GM18951 (cell line): ENCODE measurements at regions of chr4 and their contacts with region 1.

Region 1: DNA sequence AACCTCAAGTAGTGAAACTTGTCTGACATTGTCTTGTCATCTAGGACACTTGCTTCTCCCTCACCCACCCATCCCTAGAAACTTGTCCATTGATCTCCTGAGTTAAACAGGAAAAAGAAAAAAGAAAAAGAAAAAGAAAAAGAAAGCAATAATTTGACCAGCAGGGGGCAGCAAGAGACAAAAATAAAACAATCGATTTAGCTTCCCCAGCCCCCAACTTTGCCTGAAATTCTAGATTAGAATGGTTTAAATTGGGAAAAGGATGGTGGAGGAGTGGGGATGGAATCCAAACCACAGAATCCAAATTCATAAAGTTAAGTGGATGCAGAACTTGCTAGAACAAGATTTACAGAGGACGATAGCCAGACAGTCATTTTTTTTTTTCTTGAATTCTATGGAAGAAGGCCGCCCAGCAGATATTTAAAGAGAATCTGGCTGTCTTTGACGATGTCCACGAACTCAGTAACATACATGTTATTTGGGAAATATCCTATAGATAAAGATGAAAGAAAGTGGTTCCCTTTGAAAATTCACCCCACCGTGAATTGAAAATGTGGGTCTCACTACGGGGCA is 282.9 kb downstream of the USP46 start:
- POLR2A ChIP-seq: no peak

Region 2: GRCh38 chr4:52477191-52477780 is 101.1 kb after region 1 on chr4:
- in situ Hi-C with region 1: no loop called
- POLR2A ChIP-seq: no peak

Region 3: GRCh38 chr4:52659722-52660261 is 283.6 kb after region 1 on chr4:
- in situ Hi-C with region 1: loop called (anchors 10 kb)
- POLR2A ChIP-seq: no peak